ENCODE measurements at regions of chr17 and their contacts with region 1.

Region 1: DNA sequence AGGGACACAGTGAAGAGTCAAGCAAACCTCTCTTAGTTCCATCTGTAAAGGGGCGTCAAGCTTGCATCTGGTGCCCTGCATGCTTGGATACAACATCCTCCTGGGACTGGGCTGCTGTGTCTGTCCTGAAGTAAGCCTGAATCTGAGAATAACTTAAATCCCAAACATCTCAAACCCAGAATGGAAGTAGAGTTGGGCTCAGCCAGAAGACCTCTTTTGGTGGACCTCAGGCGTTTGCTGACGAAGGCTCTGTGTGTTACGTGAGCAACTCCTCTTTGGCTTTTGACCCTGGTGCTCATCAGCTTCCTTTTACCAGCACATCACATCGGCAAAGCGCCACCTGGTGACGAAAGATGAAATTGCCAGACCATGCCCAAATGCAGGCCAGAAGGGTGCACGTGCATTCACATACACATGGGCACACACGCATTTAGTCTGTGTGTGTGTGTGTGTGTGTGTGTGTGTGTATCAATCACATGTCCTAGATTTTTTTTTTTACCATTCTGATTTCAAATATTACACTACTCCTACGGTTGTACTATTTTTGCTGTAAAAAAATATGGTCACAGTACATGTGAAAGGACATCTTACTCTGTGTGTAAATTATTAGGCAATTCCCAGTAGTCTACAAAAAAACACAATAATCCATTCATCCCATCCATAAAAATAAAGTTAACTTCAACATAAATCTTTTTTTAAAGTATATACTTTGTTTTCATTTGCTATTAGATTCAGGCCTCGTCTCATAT is 41.1 kb upstream of the FOXJ1 start:
- DNase-seq: peak; percentile 88 to 94 (median 89)
- H3K4me3 ChIP-seq: no peak overlapping the region
- H3K4me3 Mint-ChIP-seq: peak overlapping the region in 6 of 8 donors; percentile 57 to 78 (median 63)
- H3K27ac ChIP-seq: no peak overlapping the region
- H3K27ac Mint-ChIP-seq: peak overlapping the region; percentile 92 to 98 (median 96)
- H3K4me1 ChIP-seq: peaks cover 72% of the 10 kb centered on the region
- H3K4me1 Mint-ChIP-seq: peaks cover 31 to 72% (median 55%) of the 10 kb centered on the region in 4 donors
- H3K27me3 ChIP-seq: no peaks in the 10 kb centered on the region
- H3K27me3 Mint-ChIP-seq: no peaks in the 10 kb centered on the region

Region 2: DNA sequence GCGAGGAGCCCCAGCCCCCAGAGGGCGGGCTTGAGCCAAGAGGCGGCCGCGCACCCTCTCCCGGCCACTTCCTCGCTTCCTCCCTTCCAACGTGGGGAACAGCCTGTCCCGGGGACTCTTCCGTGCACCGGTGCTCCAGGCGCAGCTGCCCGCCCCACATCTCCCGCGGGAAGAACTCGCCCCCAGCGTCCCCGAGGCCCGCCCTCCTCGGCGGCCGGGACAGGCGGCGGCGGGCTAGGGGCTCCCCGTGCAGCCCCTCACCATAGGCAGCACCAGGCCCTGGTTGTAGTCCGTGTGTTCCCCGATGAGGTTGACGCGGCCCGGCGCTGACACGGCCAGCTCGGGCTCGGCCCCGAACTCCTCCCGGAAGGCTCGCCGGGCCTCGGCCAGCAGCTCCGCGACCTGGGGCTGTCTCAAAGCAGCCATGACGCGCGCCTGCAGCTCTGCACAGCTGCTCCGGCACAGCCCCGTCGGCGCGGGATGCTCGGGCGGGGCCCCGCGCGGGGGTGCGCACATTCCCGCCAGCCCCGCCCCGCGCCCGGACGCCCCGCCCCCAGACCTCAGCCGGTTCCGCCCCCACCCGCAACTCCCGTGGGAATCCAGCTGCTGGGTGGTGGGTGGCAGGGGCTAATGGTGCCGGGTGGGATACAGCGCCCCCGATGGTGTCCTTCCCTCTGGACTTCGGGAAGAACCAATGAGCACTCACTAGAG is 417.3 kb before region 1 on chr17 and contains the start of gene GALK1:
- CTCF ChIA-PET with region 1: no interaction called
- POLR2A ChIA-PET with region 1: no interaction called
- intact Hi-C with region 1: no loop called
- DNase-seq: peak; percentile 67 to 73 (median 72)
- H3K4me3 ChIP-seq: peak within 1 kb of the TSS; percentile 42 to 73
- H3K4me3 Mint-ChIP-seq: peak within 1 kb of the TSS; percentile 72 to 83 (median 78)
- H3K27ac ChIP-seq: peak within 1 kb of the TSS; percentile 58
- H3K27ac Mint-ChIP-seq: peak within 1 kb of the TSS; percentile 52 to 88 (median 72)
- H3K4me1 ChIP-seq: peaks cover 17% of the 10 kb centered on the region
- H3K4me1 Mint-ChIP-seq: peaks cover 6 to 26% (median 10%) of the 10 kb centered on the region in 4 donors
- H3K27me3 ChIP-seq: no peaks in the 10 kb centered on the region
- H3K27me3 Mint-ChIP-seq: no peaks in the 10 kb centered on the region
- total RNA-seq, gene GALK1: 25.7 to 25.9 TPM

Region 3: DNA sequence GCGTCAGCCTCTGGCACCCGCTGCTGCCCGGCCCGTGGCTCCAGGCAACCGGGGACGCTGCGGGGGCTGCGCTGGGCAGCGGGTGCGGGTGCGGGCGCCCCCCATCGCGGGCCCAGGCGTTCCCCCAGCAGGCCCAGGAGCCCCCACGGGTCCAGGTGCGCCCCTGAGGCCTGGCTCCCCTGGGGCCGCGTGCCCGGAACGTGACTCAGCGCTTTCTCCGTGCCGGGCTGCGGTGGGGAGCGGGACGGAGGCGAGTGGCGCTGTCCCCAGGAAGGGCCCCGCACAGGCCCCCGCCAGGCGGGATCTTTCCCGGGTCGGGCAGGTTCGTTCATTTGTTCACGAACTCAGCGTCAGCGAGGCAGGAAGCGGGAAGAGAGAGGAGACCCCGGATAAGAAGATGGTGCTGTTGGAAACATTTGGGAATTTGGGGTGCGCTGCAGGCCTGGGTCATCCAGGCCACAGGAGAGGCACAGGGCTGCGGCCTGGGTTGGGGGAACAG is 60.2 kb before region 1 on chr17:
- CTCF ChIA-PET with region 1: interaction called, 107 read pairs
- POLR2A ChIA-PET with region 1: interaction called, 18 read pairs
- intact Hi-C with region 1: loop called (anchors 1 kb)
- DNase-seq: no peak
- H3K4me3 ChIP-seq: peak overlapping the region in 1 of 2 donors; percentile 60
- H3K4me3 Mint-ChIP-seq: peak overlapping the region in 4 of 8 donors; percentile 21 to 49 (median 37)
- H3K27ac ChIP-seq: peak overlapping the region; percentile 29
- H3K27ac Mint-ChIP-seq: peak overlapping the region in 6 of 7 donors; percentile 21 to 86 (median 65)
- H3K4me1 ChIP-seq: peaks cover 10% of the 10 kb centered on the region
- H3K4me1 Mint-ChIP-seq: peaks cover 4 to 12% (median 8%) of the 10 kb centered on the region in 4 donors
- H3K27me3 ChIP-seq: no peaks in the 10 kb centered on the region
- H3K27me3 Mint-ChIP-seq: no peaks in the 10 kb centered on the region

Region 4: GRCh38 chr17:76153640-76154039 is 28.6 kb before region 1 on chr17:
- CTCF ChIA-PET with region 1: interaction called, 214 read pairs
- POLR2A ChIA-PET with region 1: interaction called, 91 read pairs
- intact Hi-C with region 1: loop called (anchors 1 kb)
- DNase-seq: no peak
- H3K4me3 ChIP-seq: no peak overlapping the region
- H3K4me3 Mint-ChIP-seq: no peak overlapping the region
- H3K27ac ChIP-seq: no peak overlapping the region
- H3K27ac Mint-ChIP-seq: peak overlapping the region in 6 of 7 donors; percentile 22 to 79 (median 65)
- H3K4me1 ChIP-seq: peaks cover 24% of the 10 kb centered on the region
- H3K4me1 Mint-ChIP-seq: peaks cover 29 to 49% (median 35%) of the 10 kb centered on the region in 4 donors
- H3K27me3 ChIP-seq: no peaks in the 10 kb centered on the region
- H3K27me3 Mint-ChIP-seq: no peaks in the 10 kb centered on the region

Region 5: GRCh38 chr17:76204277-76204676 is 22.1 kb after region 1 on chr17:
- CTCF ChIA-PET with region 1: interaction called, 15 read pairs
- POLR2A ChIA-PET with region 1: interaction called, 42 read pairs
- intact Hi-C with region 1: loop called (anchors 2 kb)
- DNase-seq: no peak
- H3K4me3 ChIP-seq: no peak overlapping the region
- H3K4me3 Mint-ChIP-seq: no peak overlapping the region
- H3K27ac ChIP-seq: no peak overlapping the region
- H3K27ac Mint-ChIP-seq: peak overlapping the region in 4 of 7 donors; percentile 53 to 70 (median 56)
- H3K4me1 ChIP-seq: peaks cover 73% of the 10 kb centered on the region
- H3K4me1 Mint-ChIP-seq: peaks cover 41 to 75% (median 63%) of the 10 kb centered on the region in 4 donors
- H3K27me3 ChIP-seq: no peaks in the 10 kb centered on the region
- H3K27me3 Mint-ChIP-seq: no peaks in the 10 kb centered on the region

Region 6: DNA sequence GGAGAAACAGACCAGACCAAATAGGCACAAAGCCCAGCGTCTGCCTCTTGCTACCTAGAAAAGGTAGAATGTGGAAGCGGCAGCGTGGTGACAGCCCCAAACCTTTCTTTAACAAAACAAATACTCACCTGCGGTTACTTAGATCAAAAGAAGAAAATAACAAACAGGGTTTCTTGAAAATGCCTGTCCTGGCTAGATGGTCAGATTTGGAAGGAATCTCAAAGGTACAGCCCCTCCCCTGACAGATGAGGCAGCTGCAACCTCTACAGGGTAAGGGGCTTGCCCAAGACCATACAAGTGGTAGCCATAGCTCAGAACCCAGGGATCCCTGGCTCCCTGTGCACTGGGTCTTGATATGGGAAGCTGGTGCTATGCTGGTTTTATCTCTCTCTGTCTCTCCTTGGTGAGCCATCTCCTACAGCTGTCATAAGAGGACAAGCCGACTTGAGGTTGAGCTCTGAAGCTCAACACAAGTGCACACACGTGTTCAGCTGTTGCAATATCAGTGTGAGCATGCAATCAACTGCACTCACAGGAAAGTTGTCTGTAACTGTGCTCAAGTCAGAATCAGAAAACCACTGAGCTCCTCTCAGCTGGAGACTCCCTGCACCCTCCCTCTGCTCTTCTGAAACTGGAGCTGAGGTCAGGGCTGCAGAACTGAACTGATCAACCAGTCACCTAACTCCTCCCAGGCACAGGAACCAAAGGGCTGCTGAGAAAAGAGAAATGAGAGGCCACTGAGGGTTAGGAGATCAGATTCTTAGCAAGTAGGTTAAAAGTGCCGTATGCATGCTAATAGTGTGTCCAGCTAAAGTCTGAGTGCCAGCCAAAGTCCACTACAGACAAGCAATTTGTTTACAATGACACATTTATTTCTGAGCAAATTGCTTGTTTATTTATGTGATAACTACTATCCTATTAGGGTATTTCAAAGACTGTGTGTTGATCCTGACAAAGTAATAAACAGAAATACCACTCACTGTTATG is 64.2 kb after region 1 on chr17:
- CTCF ChIA-PET with region 1: interaction called, 11 read pairs
- POLR2A ChIA-PET with region 1: interaction called, 21 read pairs
- intact Hi-C with region 1: no loop called
- DNase-seq: peak; percentile 47 to 61 (median 58)
- H3K4me3 ChIP-seq: peak overlapping the region in 1 of 2 donors; percentile 11
- H3K4me3 Mint-ChIP-seq: peak overlapping the region in 7 of 8 donors; percentile 59 to 85 (median 83)
- H3K27ac ChIP-seq: peak overlapping the region; percentile 25
- H3K27ac Mint-ChIP-seq: peak overlapping the region; percentile 71 to 94 (median 91)
- H3K4me1 ChIP-seq: peaks cover 67% of the 10 kb centered on the region
- H3K4me1 Mint-ChIP-seq: peaks cover 18 to 81% (median 50%) of the 10 kb centered on the region in 4 donors
- H3K27me3 ChIP-seq: no peaks in the 10 kb centered on the region
- H3K27me3 Mint-ChIP-seq: no peaks in the 10 kb centered on the region

Region 7: DNA sequence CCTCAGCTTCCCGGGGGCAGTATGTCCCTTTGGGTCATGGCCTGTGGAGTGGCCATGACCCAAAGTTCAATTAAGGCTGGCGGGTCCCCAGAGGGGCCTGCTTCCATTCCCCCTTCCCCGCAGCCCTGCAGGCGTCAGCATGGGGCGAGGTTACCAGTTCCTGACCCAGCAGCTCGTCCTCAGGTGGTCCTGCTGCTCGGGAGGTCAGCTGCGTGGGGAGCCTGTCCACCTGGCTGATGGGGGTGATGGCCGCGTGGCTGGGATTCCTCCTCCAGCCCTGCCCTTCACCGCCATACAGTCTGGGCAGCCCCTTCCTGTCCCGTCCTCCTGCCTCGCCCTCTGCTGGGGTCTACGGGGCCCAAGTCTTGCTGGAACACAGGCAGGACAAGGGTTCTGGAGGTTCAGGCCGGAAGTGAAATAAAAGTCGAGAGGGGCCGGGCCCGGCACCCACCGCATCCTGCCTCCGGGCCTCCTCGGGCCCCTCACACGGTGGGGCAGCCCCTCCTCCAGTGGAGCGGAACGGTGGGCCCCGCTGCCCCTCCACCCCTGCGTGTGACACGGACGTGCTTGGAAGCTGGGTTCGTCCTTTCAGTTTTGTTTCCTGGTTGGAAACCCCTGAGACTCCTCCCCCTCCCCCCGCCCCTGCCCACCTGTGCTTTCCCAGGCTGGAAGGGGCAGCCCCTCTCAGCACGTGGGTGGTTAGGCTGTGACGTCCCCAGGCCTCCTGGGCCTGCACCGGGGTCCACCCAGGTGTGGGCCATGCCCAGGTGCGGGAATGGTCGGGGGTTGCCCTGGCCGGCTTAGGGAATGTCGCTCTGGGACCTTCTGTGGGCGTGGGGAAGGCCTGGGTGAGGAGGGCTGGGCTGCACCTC is 89.7 kb after region 1 on chr17:
- CTCF ChIA-PET with region 1: interaction called, 53 read pairs
- POLR2A ChIA-PET with region 1: interaction called, 603 read pairs
- intact Hi-C with region 1: no loop called
- DNase-seq: peak; percentile 56 to 85 (median 59)
- H3K4me3 ChIP-seq: peak overlapping the region in 1 of 2 donors; percentile 68
- H3K4me3 Mint-ChIP-seq: peak overlapping the region; percentile 78 to 90 (median 82)
- H3K27ac ChIP-seq: peak overlapping the region; percentile 89
- H3K27ac Mint-ChIP-seq: peak overlapping the region; percentile 86 to 96 (median 92)
- H3K4me1 ChIP-seq: peaks cover 79% of the 10 kb centered on the region
- H3K4me1 Mint-ChIP-seq: peaks cover 21 to 86% (median 48%) of the 10 kb centered on the region in 4 donors
- H3K27me3 ChIP-seq: no peaks in the 10 kb centered on the region
- H3K27me3 Mint-ChIP-seq: no peaks in the 10 kb centered on the region

Region 8: GRCh38 chr17:76427501-76428231 is 245.5 kb after region 1 on chr17:
- CTCF ChIA-PET with region 1: no interaction called
- POLR2A ChIA-PET with region 1: no interaction called
- intact Hi-C with region 1: no loop called
- DNase-seq: no peak
- H3K4me3 ChIP-seq: no peak overlapping the region
- H3K4me3 Mint-ChIP-seq: no peak overlapping the region
- H3K27ac ChIP-seq: no peak overlapping the region
- H3K27ac Mint-ChIP-seq: peak overlapping the region in 1 of 7 donors; percentile 30
- H3K4me1 ChIP-seq: no peaks in the 10 kb centered on the region
- H3K4me1 Mint-ChIP-seq: peaks cover 5 to 27% (median 13%) of the 10 kb centered on the region in 4 donors
- H3K27me3 ChIP-seq: no peaks in the 10 kb centered on the region
- H3K27me3 Mint-ChIP-seq: no peaks in the 10 kb centered on the region

Measured in CD4-positive, alpha-beta memory T cell (primary cell).